PC-3 (cell line): ENCODE measurements at regions of chr9 and their contacts with region 1.

Region 1: DNA sequence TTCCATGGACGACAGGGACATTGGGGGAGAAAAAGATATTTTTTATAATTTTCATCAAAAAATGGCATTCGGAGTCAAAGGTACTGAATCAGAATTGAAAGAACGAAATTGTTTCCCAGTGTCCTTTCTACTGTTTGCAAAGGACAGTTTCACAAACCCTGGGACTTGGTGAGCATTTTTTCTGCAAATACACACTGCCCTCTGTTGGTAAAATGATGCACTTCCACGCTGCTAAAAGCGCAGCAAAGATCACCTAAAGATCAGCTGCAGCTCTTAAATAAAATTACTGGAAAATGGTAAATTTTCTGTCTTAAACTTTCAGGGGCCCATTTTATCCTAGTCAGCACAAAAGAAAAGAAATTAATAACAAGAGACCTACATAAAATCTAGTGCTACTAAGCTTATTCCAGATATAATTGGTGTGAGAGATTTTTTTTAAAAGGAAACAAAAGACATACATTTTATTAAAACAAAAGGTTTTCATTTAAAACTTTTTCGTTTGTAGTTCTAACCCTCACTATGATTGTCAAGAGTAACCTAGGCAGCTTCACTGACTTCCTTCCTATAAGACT is 566.0 kb downstream of the CAAP1 start:
- DNase-seq: peak; percentile 79
- ATAC-seq: peak; percentile 83
- H3K4me3 ChIP-seq: peak overlapping the region; percentile 18; the same call in 1 of the 2 replicates
- H3K27ac ChIP-seq: 0 out of 2 replicates have a peak overlapping the region, but pooled peaks have one; percentile 16
- H3K4me1 ChIP-seq: peaks cover 14% of the 10 kb centered on the region
- H3K27me3 ChIP-seq: no peaks in the 10 kb centered on the region
- CTCF ChIP-seq: peak; percentile 85

Region 2: DNA sequence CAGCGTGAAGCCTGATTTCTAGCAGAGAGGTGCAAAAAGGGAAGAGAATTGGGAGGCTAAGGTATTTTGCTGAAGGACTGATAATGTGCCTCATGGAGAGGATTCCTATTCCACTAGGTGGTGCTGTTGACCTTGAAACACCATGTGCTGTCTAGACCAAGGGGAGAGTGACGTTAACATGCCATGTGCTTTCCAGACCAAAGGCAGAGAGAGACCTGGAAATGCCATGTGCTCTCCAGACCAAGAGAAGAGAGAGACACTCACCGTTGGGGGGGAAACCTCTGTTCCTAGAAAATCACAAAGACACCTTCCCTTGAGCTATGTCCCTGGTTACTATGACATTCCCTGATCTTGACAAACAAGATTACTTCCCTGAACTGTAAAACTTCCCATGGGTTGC is 362.3 kb before region 1 on chr9:
- CTCF ChIA-PET with region 1: no interaction called
- POLR2A ChIA-PET with region 1: no interaction called
- intact Hi-C with region 1: loop called (anchors 1 kb)
- DNase-seq: peak; percentile 90
- ATAC-seq: peak; percentile 86
- H3K4me3 ChIP-seq: no peak overlapping the region
- H3K27ac ChIP-seq: peak overlapping the region; percentile 23
- H3K4me1 ChIP-seq: no peaks in the 10 kb centered on the region
- H3K27me3 ChIP-seq: no peaks in the 10 kb centered on the region
- CTCF ChIP-seq: peak; percentile 73

Region 3: GRCh38 chr9:26175264-26175663 is 151.3 kb before region 1 on chr9:
- CTCF ChIA-PET with region 1: no interaction called
- POLR2A ChIA-PET with region 1: no interaction called
- intact Hi-C with region 1: loop called (anchors 2 kb)
- DNase-seq: peak; percentile 86
- ATAC-seq: peak; percentile 78
- H3K4me3 ChIP-seq: no peak overlapping the region
- H3K27ac ChIP-seq: peak overlapping the region; percentile 81
- H3K4me1 ChIP-seq: peaks cover 49% of the 10 kb centered on the region
- H3K27me3 ChIP-seq: no peaks in the 10 kb centered on the region
- CTCF ChIP-seq: no peak

Region 4: GRCh38 chr9:26261503-26262330 is 64.8 kb before region 1 on chr9:
- CTCF ChIA-PET with region 1: no interaction called
- POLR2A ChIA-PET with region 1: no interaction called
- intact Hi-C with region 1: loop called (anchors 5 kb)
- DNase-seq: peak; percentile 86
- ATAC-seq: peak; percentile 59
- H3K4me3 ChIP-seq: peak overlapping the region; percentile 41; the same call in 1 of the 2 replicates
- H3K27ac ChIP-seq: peak overlapping the region; percentile 94
- H3K4me1 ChIP-seq: peaks cover 88% of the 10 kb centered on the region
- H3K27me3 ChIP-seq: no peaks in the 10 kb centered on the region
- CTCF ChIP-seq: no peak

Region 5: GRCh38 chr9:26310294-26310693 is 16.3 kb before region 1 on chr9:
- CTCF ChIA-PET with region 1: no interaction called
- POLR2A ChIA-PET with region 1: no interaction called
- intact Hi-C with region 1: no loop called
- DNase-seq: no peak
- ATAC-seq: no peak
- H3K4me3 ChIP-seq: no peak overlapping the region
- H3K27ac ChIP-seq: no peak overlapping the region
- H3K4me1 ChIP-seq: no peaks in the 10 kb centered on the region
- H3K27me3 ChIP-seq: no peaks in the 10 kb centered on the region
- CTCF ChIP-seq: no peak

Region 6: DNA sequence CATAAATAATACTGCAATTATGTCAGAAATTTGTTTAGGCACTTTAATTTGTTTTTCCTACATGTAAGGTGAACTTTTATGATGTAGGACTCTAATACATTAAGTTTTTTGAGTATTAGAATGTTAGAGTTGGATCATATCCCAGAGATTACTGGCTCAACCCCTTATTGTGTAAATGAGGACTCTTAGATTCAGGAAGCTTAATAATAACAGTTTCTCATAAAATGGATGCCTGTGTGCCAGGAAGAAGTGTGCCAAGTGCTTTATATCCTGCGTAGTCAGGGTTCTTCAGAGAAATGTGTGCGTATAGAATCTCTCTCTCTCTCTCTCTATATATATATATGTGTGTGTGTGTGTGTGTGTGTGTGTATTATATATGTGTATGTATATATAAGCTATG is 177.5 kb after region 1 on chr9:
- CTCF ChIA-PET with region 1: no interaction called
- POLR2A ChIA-PET with region 1: no interaction called
- intact Hi-C with region 1: no loop called
- DNase-seq: no peak
- ATAC-seq: peak; percentile 49; the same call in 1 of the 2 replicates
- H3K4me3 ChIP-seq: no peak overlapping the region
- H3K27ac ChIP-seq: no peak overlapping the region
- H3K4me1 ChIP-seq: no peaks in the 10 kb centered on the region
- H3K27me3 ChIP-seq: peaks cover 35% of the 10 kb centered on the region
- CTCF ChIP-seq: no peak

Region 7: DNA sequence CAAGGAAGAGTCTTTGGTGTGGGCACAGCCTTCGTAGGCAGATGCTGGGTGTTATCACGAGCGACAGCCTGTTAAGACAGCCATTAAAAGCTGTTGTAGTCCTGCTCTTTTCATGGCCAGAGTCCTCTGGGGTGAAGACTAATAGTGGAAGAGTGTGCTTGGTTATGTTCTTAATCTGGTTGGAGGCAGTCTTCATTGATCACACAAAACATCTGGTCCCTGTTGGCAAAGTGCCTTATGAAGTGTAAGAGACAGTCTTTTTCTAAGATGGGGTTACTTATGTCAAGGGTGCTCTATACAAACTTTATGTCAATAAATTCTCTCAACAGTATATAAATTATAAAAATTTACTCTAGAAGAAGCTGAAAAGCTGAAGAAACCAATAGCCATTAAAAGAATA is 285.7 kb after region 1 on chr9:
- CTCF ChIA-PET with region 1: no interaction called
- POLR2A ChIA-PET with region 1: no interaction called
- intact Hi-C with region 1: loop called (anchors 5 kb)
- DNase-seq: no peak
- ATAC-seq: no peak
- H3K4me3 ChIP-seq: no peak overlapping the region
- H3K27ac ChIP-seq: no peak overlapping the region
- H3K4me1 ChIP-seq: no peaks in the 10 kb centered on the region
- H3K27me3 ChIP-seq: no peaks in the 10 kb centered on the region
- CTCF ChIP-seq: no peak